HepG2 (cell line): ENCODE measurements at regions of chr17 and their contacts with region 1.

Region 1: DNA sequence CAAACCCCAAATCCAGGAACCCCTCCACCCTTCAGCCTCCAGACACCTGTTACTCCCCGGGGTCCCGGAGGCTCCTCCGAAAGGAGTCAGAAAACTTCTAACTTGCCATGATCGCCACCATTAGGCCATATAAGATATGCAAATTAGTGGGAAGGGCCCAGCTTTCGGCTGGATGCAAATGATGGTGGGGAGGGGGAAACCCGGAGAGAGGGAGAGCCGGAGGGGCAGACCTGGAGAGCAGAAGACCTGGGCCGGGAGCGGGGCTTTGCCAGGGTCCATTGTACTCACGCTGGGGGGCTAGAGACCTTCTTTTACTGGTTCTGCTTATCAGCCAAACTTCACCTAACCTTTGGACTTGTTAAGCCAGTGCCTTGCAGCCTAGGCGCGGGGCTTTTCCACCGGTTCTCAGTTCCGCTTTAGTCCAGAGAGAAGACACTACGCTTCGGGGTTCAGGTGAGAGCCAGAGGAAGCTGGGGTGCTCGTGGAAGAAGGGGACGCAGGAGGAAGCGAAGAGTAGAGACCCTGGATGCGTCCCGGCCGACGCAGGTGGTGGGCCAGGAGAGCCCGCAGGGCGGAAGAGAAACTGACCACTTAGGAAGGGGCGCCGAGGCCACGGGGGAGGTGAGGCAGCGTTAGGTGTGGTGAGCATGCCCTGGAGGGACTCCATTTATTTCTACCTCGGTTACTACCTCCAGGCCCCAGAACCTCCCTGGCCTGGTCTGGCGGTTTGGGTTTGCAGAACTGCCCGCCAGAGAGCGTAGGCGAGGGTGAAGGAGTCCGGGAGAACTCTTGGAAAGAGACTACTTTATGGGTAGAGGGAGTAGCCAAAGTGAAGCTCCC is at the start of gene HNF1B:
- DNase-seq: peak; percentile 63
- ATAC-seq: peak; percentile 37
- H3K4me3 ChIP-seq: peak within 1 kb of the TSS; percentile 77 to 89 (median 80)
- H3K27ac ChIP-seq: peak within 1 kb of the TSS; percentile 94
- H3K4me1 ChIP-seq: peaks cover 41% of the 10 kb centered on the region
- H3K27me3 ChIP-seq: no peaks in the 10 kb centered on the region; a peak in 1 of 5 replicates
- CTCF ChIP-seq: no peak; the same call in 1 of the 2 replicates
- EP300 ChIP-seq: no peak
- POLR2A ChIP-seq: peak; percentile 58 to 63; a peak in 3 of 4 replicates
- RAD21 ChIP-seq: no peak
- total RNA-seq, gene HNF1B: 1.8 and 1.9 TPM in 2 replicates

Region 2: DNA sequence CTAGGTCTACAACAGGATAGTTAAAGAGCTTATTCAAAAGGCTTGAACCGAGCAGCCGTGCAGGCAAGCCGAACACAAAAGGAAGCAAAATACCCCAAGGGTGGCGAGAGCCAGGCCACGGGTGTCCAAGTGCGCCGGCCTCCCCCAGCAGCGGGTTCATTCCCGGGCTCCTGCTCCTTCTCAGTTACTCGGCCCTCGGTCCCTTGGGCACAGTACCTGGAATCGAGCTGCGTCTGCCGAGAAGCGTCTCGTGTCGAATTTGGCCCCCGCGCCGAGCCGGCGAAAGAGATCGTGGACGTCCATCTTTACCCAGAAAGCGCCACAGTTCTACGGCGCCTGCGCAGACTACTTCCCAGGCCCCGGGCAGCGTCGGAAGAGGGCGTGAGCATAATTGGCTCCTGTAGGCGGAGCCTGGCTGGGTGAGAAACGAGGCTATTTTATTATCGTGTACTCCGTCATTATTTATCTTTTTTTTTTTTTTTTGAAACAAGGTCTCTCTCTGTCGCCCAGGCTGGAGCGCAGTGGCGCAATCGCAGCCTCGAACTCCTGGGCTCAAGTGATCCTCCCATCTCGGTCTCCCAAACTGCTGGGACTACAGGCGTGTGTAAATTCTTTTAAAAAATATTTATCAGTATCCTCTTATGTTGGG is 101.9 kb before region 1 on chr17 and contains the start of gene DDX52:
- CTCF ChIA-PET with region 1: no interaction called
- POLR2A ChIA-PET with region 1: no interaction called
- in situ Hi-C with region 1: loop called (anchors 10 kb)
- intact Hi-C with region 1: no loop called
- DNase-seq: peak; percentile 89
- ATAC-seq: peak; percentile 98
- H3K4me3 ChIP-seq: peak within 1 kb of the TSS; percentile 86 to 96 (median 86)
- H3K27ac ChIP-seq: peak within 1 kb of the TSS; percentile 77
- H3K4me1 ChIP-seq: peaks cover 43% of the 10 kb centered on the region
- H3K27me3 ChIP-seq: no peaks in the 10 kb centered on the region; a peak in 2 of 5 replicates
- CTCF ChIP-seq: peak; percentile 45
- EP300 ChIP-seq: no peak
- POLR2A ChIP-seq: peak; percentile 64 to 82
- RAD21 ChIP-seq: no peak
- total RNA-seq, gene DDX52: 36.1 and 41.4 TPM in 2 replicates

Region 3: GRCh38 chr17:37671824-37672547 is 73.2 kb before region 1 on chr17:
- CTCF ChIA-PET with region 1: no interaction called
- POLR2A ChIA-PET with region 1: interaction called, 16 read pairs
- in situ Hi-C with region 1: no loop called
- intact Hi-C with region 1: no loop called
- DNase-seq: peak; percentile 85
- ATAC-seq: peak; percentile 24; the same call in 2 of the 3 replicates
- H3K4me3 ChIP-seq: no peak overlapping the region
- H3K27ac ChIP-seq: peak overlapping the region; percentile 35
- H3K4me1 ChIP-seq: peaks cover 91% of the 10 kb centered on the region
- H3K27me3 ChIP-seq: no peaks in the 10 kb centered on the region
- CTCF ChIP-seq: no peak
- EP300 ChIP-seq: peak in 1 of 2 experiments; percentile 29; a peak in 2 of 4 replicates
- POLR2A ChIP-seq: no peak
- RAD21 ChIP-seq: no peak

Region 4: GRCh38 chr17:37701496-37701898 is 43.7 kb before region 1 on chr17:
- CTCF ChIA-PET with region 1: no interaction called
- POLR2A ChIA-PET with region 1: interaction called, 11 read pairs
- in situ Hi-C with region 1: loop called (anchors 5 kb)
- intact Hi-C with region 1: loop called (anchors 2 kb)
- DNase-seq: no peak
- ATAC-seq: no peak
- H3K4me3 ChIP-seq: no peak overlapping the region
- H3K27ac ChIP-seq: no peak overlapping the region
- H3K4me1 ChIP-seq: peaks cover 53% of the 10 kb centered on the region
- H3K27me3 ChIP-seq: no peaks in the 10 kb centered on the region
- CTCF ChIP-seq: peak; percentile 72
- EP300 ChIP-seq: no peak
- POLR2A ChIP-seq: no peak
- RAD21 ChIP-seq: peak; percentile 79

Region 5: GRCh38 chr17:37717627-37718323 is 27.4 kb before region 1 on chr17:
- CTCF ChIA-PET with region 1: no interaction called
- POLR2A ChIA-PET with region 1: interaction called, 19 read pairs
- in situ Hi-C with region 1: no loop called
- intact Hi-C with region 1: no loop called
- DNase-seq: no peak
- ATAC-seq: no peak
- H3K4me3 ChIP-seq: no peak overlapping the region; a peak in 1 of 6 replicates
- H3K27ac ChIP-seq: peak overlapping the region; percentile 67
- H3K4me1 ChIP-seq: peaks cover 76% of the 10 kb centered on the region
- H3K27me3 ChIP-seq: no peaks in the 10 kb centered on the region
- CTCF ChIP-seq: no peak
- EP300 ChIP-seq: no peak
- POLR2A ChIP-seq: no peak
- RAD21 ChIP-seq: no peak

Region 6: DNA sequence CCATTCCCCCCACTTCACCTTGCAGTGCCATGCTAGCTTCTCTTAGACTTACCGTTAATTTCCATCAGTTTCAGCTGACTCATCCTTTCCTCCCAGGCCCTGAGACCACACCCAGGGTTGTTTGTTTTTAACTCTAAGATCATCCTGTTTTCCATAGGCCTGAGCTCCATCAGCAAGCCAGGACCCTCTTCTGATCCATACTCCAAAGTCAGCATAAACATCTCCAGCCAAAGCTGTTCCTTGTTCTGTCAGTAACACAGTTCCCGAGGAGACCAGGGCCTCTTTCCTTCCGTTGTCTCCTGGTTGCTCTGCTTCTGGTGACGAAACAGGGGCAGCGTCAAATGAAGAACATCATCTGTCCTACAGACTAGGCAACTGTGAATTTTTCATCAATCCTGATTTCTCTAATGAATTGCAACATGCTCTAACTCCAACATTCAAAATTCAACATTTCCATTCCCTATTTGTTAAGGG is 83.5 kb after region 1 on chr17:
- CTCF ChIA-PET with region 1: no interaction called
- POLR2A ChIA-PET with region 1: no interaction called
- in situ Hi-C with region 1: no loop called
- intact Hi-C with region 1: no loop called
- DNase-seq: no peak
- ATAC-seq: no peak
- H3K4me3 ChIP-seq: no peak overlapping the region
- H3K27ac ChIP-seq: peak overlapping the region; percentile 78
- H3K4me1 ChIP-seq: peaks cover 91% of the 10 kb centered on the region
- H3K27me3 ChIP-seq: no peaks in the 10 kb centered on the region; a peak in 1 of 5 replicates
- CTCF ChIP-seq: no peak
- EP300 ChIP-seq: peak in 1 of 2 experiments; percentile 26; a peak in 1 of 4 replicates
- POLR2A ChIP-seq: no peak
- RAD21 ChIP-seq: no peak